BJ (cell line): ENCODE measurements at regions of chr18 and their contacts with region 1.

Region 1: GRCh38 chr18:11925800-11926481 is 17.8 kb upstream of the MPPE1 start:
- DNase-seq: no peak
- H3K4me3 ChIP-seq: no peak overlapping the region
- H3K27me3 ChIP-seq: peaks cover 2% of the 10 kb centered on the region; the same call in 1 of the 2 replicates
- CTCF ChIP-seq: no peak

Region 2: GRCh38 chr18:11246495-11247300 is 679.2 kb before region 1 on chr18:
- CTCF ChIA-PET with region 1: no interaction called
- POLR2A ChIA-PET with region 1: interaction called, 13 read pairs
- DNase-seq: no peak
- H3K4me3 ChIP-seq: no peak overlapping the region
- H3K27me3 ChIP-seq: no peaks in the 10 kb centered on the region
- CTCF ChIP-seq: no peak

Region 3: DNA sequence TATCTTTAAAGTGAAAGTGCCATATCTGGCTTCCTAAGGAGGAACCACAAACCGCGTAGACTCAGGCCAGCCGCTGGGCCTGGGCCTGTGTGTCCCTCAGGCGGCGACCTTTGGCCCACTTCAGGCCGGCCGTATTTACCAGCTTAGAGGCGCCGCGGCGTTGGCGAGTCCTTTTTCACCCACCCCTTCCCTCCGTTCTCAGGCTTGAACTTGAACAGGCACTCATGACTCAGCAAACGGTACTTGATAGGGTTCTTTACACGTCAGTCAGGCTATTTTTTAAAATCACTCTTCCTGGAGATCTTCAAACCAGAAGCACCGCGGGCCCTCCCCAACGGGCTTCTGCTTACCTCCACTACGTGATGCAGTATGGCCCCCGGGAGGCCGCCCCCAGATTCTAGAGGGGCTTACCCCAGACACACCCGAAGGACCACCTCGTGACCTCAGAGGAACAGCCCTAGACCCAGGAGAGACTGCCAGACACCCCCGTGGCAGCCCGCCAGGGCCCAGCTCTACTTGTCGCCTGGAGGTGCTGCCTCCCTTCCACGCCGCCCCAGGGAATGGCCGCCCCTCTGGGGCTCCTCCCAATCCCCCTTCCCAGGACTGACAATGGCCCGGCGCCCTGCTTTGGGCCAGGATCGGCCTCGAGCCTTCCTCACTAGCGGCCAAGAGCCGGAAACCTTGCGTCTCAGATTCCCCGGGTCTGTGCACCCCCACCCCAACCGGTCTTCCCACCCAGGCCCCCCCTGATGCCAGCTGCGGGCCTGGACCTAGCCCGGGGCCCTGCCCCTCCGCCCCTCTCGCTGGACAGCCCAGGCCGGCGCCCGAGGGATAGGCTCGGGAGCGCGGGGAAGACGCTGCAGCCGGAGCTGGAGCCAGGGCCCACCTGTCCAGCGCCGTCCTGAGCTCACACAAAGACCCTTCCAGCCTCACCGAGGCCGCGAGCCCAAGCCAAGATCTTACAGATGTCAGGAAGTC is 21.6 kb after region 1 on chr18:
- CTCF ChIA-PET with region 1: no interaction called
- POLR2A ChIA-PET with region 1: no interaction called
- DNase-seq: peak; percentile 80
- H3K4me3 ChIP-seq: peak overlapping the region; percentile 30
- H3K27me3 ChIP-seq: no peaks in the 10 kb centered on the region
- CTCF ChIP-seq: no peak